ENCODE measurements at regions of chr10 and their contacts with region 1.

Region 1: DNA sequence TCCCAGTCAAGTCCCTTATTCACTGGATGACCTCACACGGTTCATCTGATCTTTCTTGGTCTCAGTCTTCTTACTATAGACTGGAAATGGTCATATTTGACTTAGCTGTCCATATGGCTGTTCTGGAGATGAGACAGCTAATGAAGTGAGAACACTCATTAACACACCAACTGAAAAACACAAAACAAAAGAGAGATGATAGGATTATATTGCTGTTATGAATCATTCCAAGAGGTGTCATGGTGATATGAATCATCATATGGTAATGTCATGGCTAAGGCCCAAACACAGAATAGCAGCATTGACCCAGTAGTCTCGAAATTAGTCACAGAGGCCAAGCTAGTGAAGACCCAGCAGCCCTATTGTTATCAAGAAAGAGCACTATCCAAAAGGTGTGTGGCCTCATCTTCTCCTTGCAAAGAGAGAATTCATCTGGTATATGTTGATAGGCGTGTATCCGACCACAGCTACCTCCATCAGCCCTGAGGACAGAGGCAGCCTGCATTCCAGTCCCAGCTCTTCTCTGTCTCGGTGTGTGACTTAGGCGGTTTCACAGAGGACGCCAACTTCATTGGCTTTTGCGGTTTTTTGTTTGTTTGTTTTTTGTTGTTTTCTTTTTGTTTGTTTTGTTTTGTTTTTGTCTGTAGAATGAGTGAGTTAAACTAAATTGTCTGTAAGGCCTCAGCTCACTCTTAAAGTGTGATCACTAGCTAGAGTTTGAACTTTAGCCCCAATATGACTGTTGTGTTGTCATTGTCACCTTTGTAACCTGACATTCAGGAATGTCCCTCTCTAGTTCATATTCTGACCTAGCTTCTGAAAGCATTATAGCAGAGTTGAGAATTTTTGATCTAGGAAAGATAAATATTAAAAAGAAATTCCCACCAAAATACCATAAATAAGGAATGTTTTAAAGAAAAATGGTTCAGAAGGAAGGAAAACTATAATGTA is 97.4 kb upstream of the PDCD4 start:
- DNase-seq: peak; percentile 99
- ATAC-seq: peak; percentile 94
- H3K4me3 ChIP-seq: no peak overlapping the region
- H3K27ac ChIP-seq: peak overlapping the region; percentile 85
- H3K4me1 ChIP-seq: peaks cover 22% of the 10 kb centered on the region
- H3K27me3 ChIP-seq: no peaks in the 10 kb centered on the region
- CTCF ChIP-seq: no peak
- EP300 ChIP-seq: peak; percentile 100
- POLR2A ChIP-seq: peak; percentile 38; the same call in 1 of the 2 replicates
- RAD21 ChIP-seq: no peak

Region 2: GRCh38 chr10:110758898-110759297 is 15.4 kb before region 1 on chr10:
- CTCF ChIA-PET with region 1: interaction called, 5 read pairs
- POLR2A ChIA-PET with region 1: interaction called, 5 read pairs
- RAD21 ChIA-PET with region 1: interaction called, 12 read pairs
- SMC1A ChIA-PET with region 1: interaction called, 8 read pairs
- in situ Hi-C with region 1: no loop called
- intact Hi-C with region 1: no loop called
- DNase-seq: no peak
- ATAC-seq: no peak
- H3K4me3 ChIP-seq: no peak overlapping the region
- H3K27ac ChIP-seq: no peak overlapping the region
- H3K4me1 ChIP-seq: peaks cover 7% of the 10 kb centered on the region
- H3K27me3 ChIP-seq: no peaks in the 10 kb centered on the region
- CTCF ChIP-seq: no peak
- EP300 ChIP-seq: no peak
- POLR2A ChIP-seq: no peak
- RAD21 ChIP-seq: no peak

Region 3: DNA sequence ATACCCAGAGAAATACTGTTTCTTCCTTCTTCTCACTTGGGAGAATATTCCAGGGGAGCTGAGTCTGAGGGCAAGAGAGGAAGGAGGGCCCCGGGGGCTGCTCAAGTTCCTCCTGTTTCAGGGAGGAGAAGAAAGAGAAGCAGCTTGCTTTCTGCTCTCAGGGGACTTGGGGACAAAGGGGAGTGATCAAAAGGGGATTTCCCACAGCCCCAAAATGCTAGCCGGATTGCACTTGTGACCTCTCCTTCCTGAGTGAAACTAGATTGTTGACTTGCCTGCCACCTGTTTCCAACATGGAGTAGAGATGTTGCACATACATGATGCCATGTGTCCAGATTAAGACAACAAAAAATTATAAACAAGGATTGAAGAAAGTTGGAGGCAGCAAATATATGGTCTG is 68.7 kb after region 1 on chr10:
- CTCF ChIA-PET with region 1: interaction called, 5 read pairs
- POLR2A ChIA-PET with region 1: interaction called, 14 read pairs
- RAD21 ChIA-PET with region 1: interaction called, 35 read pairs
- SMC1A ChIA-PET with region 1: interaction called, 37 read pairs
- in situ Hi-C with region 1: no loop called
- intact Hi-C with region 1: loop called (anchors 2 kb)
- DNase-seq: peak; percentile 98
- ATAC-seq: peak; percentile 74
- H3K4me3 ChIP-seq: peak overlapping the region; percentile 68
- H3K27ac ChIP-seq: peak overlapping the region; percentile 97
- H3K4me1 ChIP-seq: peaks cover 53% of the 10 kb centered on the region
- H3K27me3 ChIP-seq: no peaks in the 10 kb centered on the region
- CTCF ChIP-seq: no peak
- EP300 ChIP-seq: peak; percentile 53 to 91; a peak in 3 of 4 replicates
- POLR2A ChIP-seq: no peak; the same call in 1 of the 2 replicates
- RAD21 ChIP-seq: peak; percentile 37; the same call in 1 of the 2 replicates

Region 4: GRCh38 chr10:110864662-110865140 is 90.4 kb after region 1 on chr10:
- CTCF ChIA-PET with region 1: no interaction called
- POLR2A ChIA-PET with region 1: interaction called, 12 read pairs
- RAD21 ChIA-PET with region 1: interaction called, 23 read pairs
- SMC1A ChIA-PET with region 1: interaction called, 14 read pairs
- in situ Hi-C with region 1: no loop called
- intact Hi-C with region 1: no loop called
- DNase-seq: peak; percentile 97
- ATAC-seq: peak; percentile 61
- H3K4me3 ChIP-seq: peak overlapping the region; percentile 62; the same call in 1 of the 2 replicates
- H3K27ac ChIP-seq: peak overlapping the region; percentile 99
- H3K4me1 ChIP-seq: peaks cover 93% of the 10 kb centered on the region
- H3K27me3 ChIP-seq: no peaks in the 10 kb centered on the region
- CTCF ChIP-seq: no peak
- EP300 ChIP-seq: peak; percentile 16 to 71; a peak in 1 of 4 replicates
- POLR2A ChIP-seq: no peak
- RAD21 ChIP-seq: 0 out of 2 replicates have a peak, but pooled peaks have one; percentile 5

Region 5: GRCh38 chr10:110893559-110894179 is 119.3 kb after region 1 on chr10:
- CTCF ChIA-PET with region 1: interaction called, 8 read pairs
- POLR2A ChIA-PET with region 1: interaction called, 10 read pairs
- RAD21 ChIA-PET with region 1: interaction called, 15 read pairs
- SMC1A ChIA-PET with region 1: interaction called, 5 read pairs
- in situ Hi-C with region 1: no loop called
- intact Hi-C with region 1: no loop called
- DNase-seq: no peak
- ATAC-seq: peak; percentile 93
- H3K4me3 ChIP-seq: no peak overlapping the region
- H3K27ac ChIP-seq: no peak overlapping the region
- H3K4me1 ChIP-seq: no peaks in the 10 kb centered on the region
- H3K27me3 ChIP-seq: no peaks in the 10 kb centered on the region
- CTCF ChIP-seq: peak; percentile 34 to 52 (median 44); a peak in 4 of 6 replicates
- EP300 ChIP-seq: no peak
- POLR2A ChIP-seq: no peak
- RAD21 ChIP-seq: peak; percentile 66

Measured in GM12878 (cell line).